ENCODE measurements at regions of chr6 and their contacts with region 1.

Region 1: GRCh38 chr6:137707590-137708360 is 159.3 kb upstream of the TNFAIP3 start:
- H3K4me3 Mint-ChIP-seq: peak overlapping the region; percentile 51
- H3K27ac Mint-ChIP-seq: no peak overlapping the region
- H3K4me1 Mint-ChIP-seq: peaks cover 42% of the 10 kb centered on the region
- H3K27me3 Mint-ChIP-seq: peaks cover 71% of the 10 kb centered on the region

Region 2: DNA sequence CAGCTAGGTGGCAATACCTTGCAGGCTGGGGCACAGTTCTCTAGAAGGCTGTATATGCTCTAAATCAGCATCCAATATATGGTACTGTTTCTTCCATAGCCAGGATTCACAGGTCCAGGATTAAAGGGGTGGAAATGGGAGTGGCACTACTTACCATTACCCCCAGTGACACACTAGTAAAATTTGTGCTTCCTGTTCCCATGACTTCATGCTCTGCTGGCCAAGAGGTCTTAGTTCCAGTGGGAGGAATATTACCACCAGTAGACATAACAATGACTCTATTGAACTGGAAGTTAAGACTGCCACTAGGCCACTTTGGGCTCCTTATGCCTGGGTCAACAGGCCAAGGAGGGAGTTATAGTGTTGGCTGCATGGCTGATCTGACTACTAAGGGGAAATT is 15.0 kb before region 1 on chr6:
- intact Hi-C with region 1: no loop called
- H3K4me3 Mint-ChIP-seq: no peak overlapping the region
- H3K27ac Mint-ChIP-seq: no peak overlapping the region
- H3K4me1 Mint-ChIP-seq: peaks cover 8% of the 10 kb centered on the region
- H3K27me3 Mint-ChIP-seq: peaks cover 8% of the 10 kb centered on the region

Region 3: DNA sequence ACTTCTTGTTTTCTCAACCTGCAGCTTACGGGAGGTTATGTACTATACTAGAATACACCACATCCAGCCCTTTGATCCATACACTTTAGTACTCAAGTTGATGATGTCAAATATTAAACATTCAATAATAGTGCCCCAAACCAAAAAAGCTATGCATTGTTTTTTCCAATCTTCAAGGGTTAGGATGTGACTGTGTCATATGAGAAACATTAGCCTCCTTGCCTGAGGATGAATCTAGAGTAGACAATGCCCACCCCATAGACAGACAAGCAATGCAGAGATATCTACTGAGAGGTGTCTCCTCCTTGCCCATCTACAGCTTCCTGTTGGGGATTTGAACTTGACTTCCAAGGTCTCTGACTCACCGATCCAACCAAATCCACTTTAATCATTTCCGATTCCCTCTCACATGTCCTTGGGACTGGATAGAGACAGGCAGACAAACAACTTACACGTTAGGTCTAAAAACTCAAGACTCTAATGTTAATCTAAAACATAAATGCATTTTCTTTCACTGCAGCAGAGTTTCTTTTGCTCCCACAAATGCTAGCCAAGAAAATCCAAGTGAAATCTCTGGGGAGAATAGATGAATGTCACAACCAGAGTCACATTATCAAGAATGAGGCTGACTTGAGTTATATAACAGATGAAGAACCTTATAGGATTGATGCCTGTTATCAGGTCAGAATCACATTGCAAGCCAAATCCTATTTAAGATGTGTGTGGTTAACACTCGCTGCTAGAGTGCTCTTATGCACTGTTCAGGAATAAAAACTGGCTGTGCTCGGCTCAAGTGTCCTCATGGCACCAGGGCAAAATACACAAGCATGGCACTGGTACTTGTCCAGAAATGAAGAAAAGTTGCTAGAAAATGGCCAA is 83.7 kb after region 1 on chr6:
- intact Hi-C with region 1: loop called (anchors 5 kb)
- H3K4me3 Mint-ChIP-seq: no peak overlapping the region
- H3K27ac Mint-ChIP-seq: peak overlapping the region; percentile 17
- H3K4me1 Mint-ChIP-seq: peaks cover 33% of the 10 kb centered on the region
- H3K27me3 Mint-ChIP-seq: peaks cover 11% of the 10 kb centered on the region

Region 4: GRCh38 chr6:137866914-137867684 is 159.3 kb after region 1 on chr6 and contains the start of gene TNFAIP3:
- intact Hi-C with region 1: loop called (anchors 1 kb)
- H3K4me3 Mint-ChIP-seq: peak within 1 kb of the TSS; percentile 94
- H3K27ac Mint-ChIP-seq: peak within 1 kb of the TSS; percentile 96
- H3K4me1 Mint-ChIP-seq: peaks cover 54% of the 10 kb centered on the region
- H3K27me3 Mint-ChIP-seq: peaks cover 2% of the 10 kb centered on the region

Region 5: GRCh38 chr6:137975188-137975940 is 267.6 kb after region 1 on chr6:
- intact Hi-C with region 1: loop called (anchors 10 kb)
- H3K4me3 Mint-ChIP-seq: no peak overlapping the region
- H3K27ac Mint-ChIP-seq: no peak overlapping the region
- H3K4me1 Mint-ChIP-seq: peaks cover 16% of the 10 kb centered on the region
- H3K27me3 Mint-ChIP-seq: peaks cover 10% of the 10 kb centered on the region

Region 6: DNA sequence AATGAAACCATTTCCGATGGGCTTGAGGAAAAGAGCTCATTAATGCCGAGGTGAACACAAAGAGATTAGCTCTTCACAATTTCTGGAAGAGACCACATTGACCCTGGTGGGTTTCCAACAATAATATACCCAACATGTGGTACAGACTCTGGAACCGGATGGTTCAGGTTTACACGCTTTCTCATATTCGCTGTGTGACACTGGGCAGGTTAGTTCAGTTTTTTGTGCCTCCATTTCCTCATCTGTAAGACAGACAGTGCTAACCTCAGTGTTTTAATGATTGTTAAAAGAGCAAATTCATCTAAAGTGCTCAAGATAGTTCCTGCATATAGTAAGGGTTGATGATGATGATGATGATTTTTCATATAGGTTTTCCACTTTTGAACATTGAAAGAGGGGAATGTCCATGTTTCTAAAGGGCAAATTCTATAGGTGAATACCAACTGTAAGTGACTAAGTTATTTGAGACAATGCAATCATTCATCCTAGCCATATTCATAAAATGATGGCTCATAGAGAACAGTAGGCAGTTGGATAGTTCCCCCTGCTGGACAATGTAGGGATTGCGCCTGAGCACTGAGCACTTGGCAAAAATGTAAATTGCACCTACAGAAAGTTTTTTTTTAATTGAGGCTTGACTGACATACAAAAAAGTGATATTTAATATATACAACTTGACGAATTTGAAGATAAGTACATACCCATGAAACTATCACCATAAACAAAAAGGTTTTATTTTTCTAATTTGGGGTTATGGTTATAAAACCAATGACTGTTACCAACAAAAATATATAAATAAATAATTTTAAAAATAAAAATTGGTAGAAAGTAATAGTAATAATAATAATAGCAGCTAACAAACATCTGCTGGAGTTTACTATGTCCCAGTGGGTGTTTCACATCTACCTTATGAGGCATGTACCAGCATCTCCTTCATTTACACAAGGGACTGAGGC is 401.5 kb after region 1 on chr6:
- intact Hi-C with region 1: loop called (anchors 5 kb)
- H3K4me3 Mint-ChIP-seq: no peak overlapping the region
- H3K27ac Mint-ChIP-seq: no peak overlapping the region
- H3K4me1 Mint-ChIP-seq: peaks cover 16% of the 10 kb centered on the region
- H3K27me3 Mint-ChIP-seq: peaks cover 53% of the 10 kb centered on the region

Measured in dendritic cell treated with granulocyte-macrophage colony-stimulating factor and Interleukin-4, amounts not matched to agents 40 ng/mL and 50 ng/mL, for 4 days (primary cell).